ENCODE measurements at regions of chr17 and their contacts with region 1.

Region 1: GRCh38 chr17:50783193-50783660 is 15.9 kb upstream of the ANKRD40CL start:
- DNase-seq: peak; percentile 86
- ATAC-seq: peak; percentile 71
- H3K4me3 Mint-ChIP-seq: no peak overlapping the region
- H3K27ac Mint-ChIP-seq: no peak overlapping the region
- H3K4me1 Mint-ChIP-seq: peaks cover 33% of the 10 kb centered on the region
- H3K27me3 Mint-ChIP-seq: peaks cover 35% of the 10 kb centered on the region

Region 2: GRCh38 chr17:50661795-50662391 is 121.3 kb before region 1 on chr17:
- CTCF ChIA-PET with region 1: no interaction called
- DNase-seq: peak; percentile 65
- ATAC-seq: peak; percentile 78
- H3K4me3 Mint-ChIP-seq: no peak overlapping the region
- H3K27ac Mint-ChIP-seq: peak overlapping the region; percentile 75
- H3K4me1 Mint-ChIP-seq: peaks cover 14% of the 10 kb centered on the region
- H3K27me3 Mint-ChIP-seq: no peaks in the 10 kb centered on the region

Region 3: GRCh38 chr17:50800196-50800700 is 17.0 kb after region 1 on chr17:
- CTCF ChIA-PET with region 1: interaction called, 20 read pairs
- DNase-seq: no peak
- ATAC-seq: no peak
- H3K4me3 Mint-ChIP-seq: no peak overlapping the region
- H3K27ac Mint-ChIP-seq: no peak overlapping the region
- H3K4me1 Mint-ChIP-seq: no peaks in the 10 kb centered on the region
- H3K27me3 Mint-ChIP-seq: no peaks in the 10 kb centered on the region

Region 4: DNA sequence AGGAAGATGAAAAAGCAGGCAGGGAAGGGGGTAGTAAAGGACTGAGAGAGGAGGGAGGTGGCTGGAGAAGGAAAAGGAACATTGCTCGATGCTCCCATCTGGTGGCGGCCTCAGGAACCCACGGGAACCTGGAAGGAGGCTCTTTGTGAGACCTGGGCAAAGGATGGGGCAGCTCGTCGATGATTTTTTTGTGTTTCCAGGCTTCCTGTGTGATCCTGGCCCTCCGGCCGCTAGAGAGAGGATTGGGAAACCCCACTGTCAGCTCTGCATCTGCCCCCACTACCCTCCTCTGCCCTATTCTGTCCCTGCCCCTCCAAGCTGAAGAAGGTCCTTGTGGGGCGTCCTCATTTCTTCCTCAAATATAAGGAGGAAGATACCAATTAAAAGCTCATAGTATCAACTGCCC is 58.7 kb after region 1 on chr17:
- CTCF ChIA-PET with region 1: interaction called, 57 read pairs
- DNase-seq: peak; percentile 72
- ATAC-seq: peak; percentile 79
- H3K4me3 Mint-ChIP-seq: no peak overlapping the region
- H3K27ac Mint-ChIP-seq: no peak overlapping the region
- H3K4me1 Mint-ChIP-seq: no peaks in the 10 kb centered on the region
- H3K27me3 Mint-ChIP-seq: no peaks in the 10 kb centered on the region

Region 5: GRCh38 chr17:50853015-50853615 is 69.9 kb after region 1 on chr17:
- CTCF ChIA-PET with region 1: interaction called, 38 read pairs
- DNase-seq: peak; percentile 25
- ATAC-seq: no peak
- H3K4me3 Mint-ChIP-seq: peak overlapping the region; percentile 71
- H3K27ac Mint-ChIP-seq: peak overlapping the region; percentile 92
- H3K4me1 Mint-ChIP-seq: peaks cover 25% of the 10 kb centered on the region
- H3K27me3 Mint-ChIP-seq: peaks cover 20% of the 10 kb centered on the region

Region 6: DNA sequence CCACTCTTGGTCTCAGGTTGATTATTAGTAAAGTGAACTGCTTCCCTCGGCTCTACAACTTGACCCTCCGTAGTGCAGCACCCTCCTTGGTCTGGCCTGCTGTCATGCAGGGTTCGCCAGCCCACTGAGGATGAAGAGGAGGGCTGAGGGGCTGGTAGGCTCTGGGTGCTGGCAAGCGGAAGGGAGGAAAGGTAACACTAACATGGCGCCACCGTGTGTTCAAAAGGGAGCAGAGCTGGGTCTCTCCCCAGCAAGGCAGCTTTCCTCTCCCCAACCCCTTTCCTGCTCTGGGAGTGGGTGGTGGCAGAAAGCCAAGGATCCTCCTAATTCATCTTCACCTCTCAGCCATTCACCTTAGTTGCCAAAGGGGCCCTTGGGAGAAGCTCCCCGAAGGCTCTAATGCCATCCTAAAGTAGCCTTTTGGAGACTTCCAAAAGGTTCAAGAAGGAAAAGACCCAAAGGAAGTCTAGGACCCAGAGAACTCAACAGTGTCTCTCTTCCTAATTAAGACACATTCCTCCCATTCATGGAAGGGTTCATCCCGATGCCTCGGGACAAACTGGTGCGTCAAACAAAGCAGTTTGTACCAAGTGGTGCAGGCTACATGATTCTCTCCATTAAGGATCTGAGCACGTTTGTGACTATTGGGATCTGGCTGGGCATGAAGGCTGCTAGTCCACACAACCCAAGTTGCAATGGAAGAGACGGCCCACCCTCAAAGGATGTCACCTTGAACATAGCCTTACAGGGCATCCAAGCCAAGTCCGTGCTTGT is 173.7 kb after region 1 on chr17:
- CTCF ChIA-PET with region 1: interaction called, 17 read pairs
- DNase-seq: peak; percentile 73
- ATAC-seq: peak; percentile 91
- H3K4me3 Mint-ChIP-seq: no peak overlapping the region
- H3K27ac Mint-ChIP-seq: peak overlapping the region; percentile 43
- H3K4me1 Mint-ChIP-seq: peaks cover 7% of the 10 kb centered on the region
- H3K27me3 Mint-ChIP-seq: peaks cover 4% of the 10 kb centered on the region

Measured in activated CD8-positive, alpha-beta memory T cell treated with anti-CD3 and anti-CD28 coated beads, Interleukin-2, amount 10 ng/mL, durations not matched to agents 7 days and 5 days (primary cell).